ENCODE measurements at regions of chr20 and their contacts with region 1.

Region 1: GRCh38 chr20:49846206-49846807 is 33.7 kb downstream of the SLC9A8 start:
- DNase-seq: no peak
- ATAC-seq: peak; percentile 82
- H3K4me3 Mint-ChIP-seq: no peak overlapping the region
- H3K27ac Mint-ChIP-seq: no peak overlapping the region
- H3K4me1 Mint-ChIP-seq: peaks cover 17% of the 10 kb centered on the region
- H3K27me3 Mint-ChIP-seq: no peaks in the 10 kb centered on the region
- CTCF ChIP-seq: no peak

Region 2: GRCh38 chr20:49330544-49331239 is 515.6 kb before region 1 on chr20:
- CTCF ChIA-PET with region 1: interaction called, 3 read pairs
- POLR2A ChIA-PET with region 1: no interaction called
- intact Hi-C with region 1: loop called (anchors 5 kb)
- DNase-seq: no peak
- ATAC-seq: no peak
- H3K4me3 Mint-ChIP-seq: no peak overlapping the region
- H3K27ac Mint-ChIP-seq: no peak overlapping the region
- H3K4me1 Mint-ChIP-seq: no peaks in the 10 kb centered on the region
- H3K27me3 Mint-ChIP-seq: peaks cover 24% of the 10 kb centered on the region
- CTCF ChIP-seq: no peak

Region 3: DNA sequence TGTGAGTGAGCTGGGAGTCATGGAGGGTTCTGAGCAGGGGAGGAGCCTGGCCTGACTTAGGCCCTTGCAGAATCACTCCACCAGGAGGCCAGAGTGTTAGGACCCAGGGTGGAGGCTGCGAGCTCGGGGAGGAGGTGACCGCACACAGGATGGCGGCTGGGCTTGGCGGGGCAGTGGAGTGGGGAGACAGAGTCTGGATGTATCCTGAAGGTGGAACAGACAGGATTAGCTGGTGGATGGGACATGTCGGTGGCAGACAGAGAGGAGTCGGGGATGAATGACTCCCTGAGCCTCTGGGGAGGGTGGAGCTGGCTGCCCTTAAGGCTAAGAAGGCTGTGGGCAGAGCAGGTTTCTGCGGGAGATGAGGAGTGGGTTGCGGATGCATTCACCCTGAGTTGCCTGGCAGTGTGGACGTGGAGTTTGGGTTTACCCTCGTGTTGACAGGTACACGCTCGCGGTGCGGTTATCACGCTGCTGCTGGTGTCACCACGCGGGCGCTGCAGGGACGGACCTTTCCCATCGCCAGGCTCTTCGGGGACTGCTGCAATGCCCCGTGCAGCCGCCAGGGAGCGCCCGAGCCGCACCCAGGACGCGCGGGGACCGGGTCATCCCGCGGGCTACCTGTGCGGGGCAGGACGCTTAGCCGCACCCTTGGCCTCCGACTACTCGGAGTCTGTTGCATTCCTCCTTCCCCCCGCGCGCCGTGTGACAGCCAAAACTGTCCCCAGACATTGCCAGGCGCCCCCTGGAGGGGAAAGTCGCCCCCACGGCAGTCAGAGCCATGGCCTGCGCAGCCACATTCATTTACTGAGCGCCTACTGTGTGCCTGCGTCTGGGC is 235.4 kb before region 1 on chr20:
- CTCF ChIA-PET with region 1: interaction called, 85 read pairs
- POLR2A ChIA-PET with region 1: interaction called, 7 read pairs
- intact Hi-C with region 1: loop called (anchors 1 kb)
- DNase-seq: peak; percentile 81
- ATAC-seq: peak; percentile 87
- H3K4me3 Mint-ChIP-seq: peak overlapping the region; percentile 68
- H3K27ac Mint-ChIP-seq: no peak overlapping the region
- H3K4me1 Mint-ChIP-seq: peaks cover 21% of the 10 kb centered on the region
- H3K27me3 Mint-ChIP-seq: peaks cover 12% of the 10 kb centered on the region
- CTCF ChIP-seq: peak; percentile 79

Region 4: DNA sequence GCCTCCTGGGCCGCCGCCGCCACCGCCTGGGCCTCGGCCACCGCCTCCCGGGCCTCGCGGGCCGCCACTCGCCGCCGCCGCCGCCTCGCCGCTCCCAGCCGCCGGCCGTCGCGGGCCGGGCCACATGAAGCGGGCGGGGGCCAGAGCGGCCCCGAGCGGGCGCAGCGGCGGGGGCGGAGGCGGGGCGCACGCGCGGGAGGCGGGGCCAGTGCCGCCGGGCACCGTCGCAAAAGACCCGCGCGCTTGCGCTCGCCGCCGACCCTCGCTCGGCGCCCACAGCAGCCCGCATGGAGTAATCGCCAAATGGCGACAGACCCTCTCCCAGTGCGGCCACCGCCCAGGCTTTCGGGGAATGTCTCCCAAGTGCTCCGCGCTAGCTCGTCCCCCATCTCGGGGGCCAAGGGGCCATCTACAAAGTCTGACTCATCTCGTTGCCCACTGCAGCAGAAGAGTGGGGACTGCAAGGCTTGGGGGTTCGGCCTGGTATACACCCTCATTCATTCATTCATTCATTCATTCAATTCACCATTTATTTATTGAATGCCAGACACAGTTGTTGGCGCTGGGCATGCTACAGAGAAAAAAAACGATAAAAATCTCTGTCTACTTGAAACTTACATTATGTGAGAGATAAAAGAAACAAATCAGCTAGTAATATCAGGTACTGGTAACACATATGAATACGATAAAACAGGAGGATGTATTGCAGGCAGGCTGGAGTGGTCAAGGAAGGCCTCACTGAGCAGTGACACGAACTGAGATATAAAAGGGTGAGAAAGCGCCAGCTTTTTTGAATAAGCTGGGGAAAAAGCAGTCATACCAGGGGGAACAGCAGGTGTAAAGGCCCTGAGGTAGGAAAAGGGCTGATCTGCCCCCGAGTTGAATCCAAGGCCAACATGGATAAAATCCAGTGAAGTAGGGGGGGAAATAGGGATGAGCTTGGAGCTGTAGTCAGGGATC is 132.3 kb before region 1 on chr20 and contains the start of gene B4GALT5:
- CTCF ChIA-PET with region 1: interaction called, 5 read pairs
- POLR2A ChIA-PET with region 1: interaction called, 7 read pairs
- intact Hi-C with region 1: loop called (anchors 2 kb)
- DNase-seq: peak; percentile 81
- ATAC-seq: peak; percentile 79
- H3K4me3 Mint-ChIP-seq: peak within 1 kb of the TSS; percentile 96
- H3K27ac Mint-ChIP-seq: peak within 1 kb of the TSS; percentile 94
- H3K4me1 Mint-ChIP-seq: peaks cover 48% of the 10 kb centered on the region
- H3K27me3 Mint-ChIP-seq: no peaks in the 10 kb centered on the region
- CTCF ChIP-seq: no peak
- total RNA-seq, gene B4GALT5: 70.6 and 72.9 TPM in 2 replicates

Region 5: GRCh38 chr20:49821870-49822331 is 24.4 kb before region 1 on chr20:
- CTCF ChIA-PET with region 1: interaction called, 28 read pairs
- POLR2A ChIA-PET with region 1: interaction called, 3 read pairs
- intact Hi-C with region 1: no loop called
- DNase-seq: no peak
- ATAC-seq: no peak
- H3K4me3 Mint-ChIP-seq: peak overlapping the region; percentile 24
- H3K27ac Mint-ChIP-seq: peak overlapping the region; percentile 76
- H3K4me1 Mint-ChIP-seq: peaks cover 48% of the 10 kb centered on the region
- H3K27me3 Mint-ChIP-seq: no peaks in the 10 kb centered on the region
- CTCF ChIP-seq: no peak

Region 6: DNA sequence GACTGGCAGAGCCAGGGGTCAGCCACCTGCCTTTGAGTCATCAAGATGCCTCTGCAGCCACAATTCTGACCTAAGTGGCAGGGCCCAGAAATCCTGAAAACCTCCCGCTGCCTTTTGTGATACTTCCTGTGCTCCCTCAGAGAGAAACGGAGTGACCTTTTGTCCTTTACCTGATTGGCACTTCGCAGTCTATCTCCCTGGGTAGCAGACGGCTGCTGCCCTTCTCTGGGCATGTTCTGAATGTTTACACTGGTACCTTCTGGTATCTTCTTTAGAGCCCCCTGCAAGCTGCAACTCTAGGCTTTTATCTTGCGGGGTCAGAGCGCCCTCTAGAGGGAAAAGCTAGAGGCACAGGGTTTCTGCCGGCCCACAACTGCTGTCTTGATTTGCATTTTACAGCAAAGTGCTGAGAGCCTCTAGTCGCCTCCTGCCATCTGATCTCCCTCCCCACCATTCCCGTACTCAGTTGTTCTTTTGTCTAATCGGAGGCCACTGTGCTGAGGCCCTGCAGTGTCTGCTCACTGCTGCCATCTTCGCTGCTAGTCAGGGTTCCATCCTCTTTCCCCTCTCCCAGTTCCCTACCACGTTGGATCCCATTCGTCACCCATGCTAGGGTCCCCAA is 42.1 kb after region 1 on chr20:
- CTCF ChIA-PET with region 1: interaction called, 15 read pairs
- POLR2A ChIA-PET with region 1: interaction called, 3 read pairs
- intact Hi-C with region 1: loop called (anchors 2 kb)
- DNase-seq: peak; percentile 54
- ATAC-seq: peak; percentile 69
- H3K4me3 Mint-ChIP-seq: no peak overlapping the region
- H3K27ac Mint-ChIP-seq: peak overlapping the region; percentile 46
- H3K4me1 Mint-ChIP-seq: peaks cover 10% of the 10 kb centered on the region
- H3K27me3 Mint-ChIP-seq: no peaks in the 10 kb centered on the region
- CTCF ChIP-seq: no peak

Region 7: DNA sequence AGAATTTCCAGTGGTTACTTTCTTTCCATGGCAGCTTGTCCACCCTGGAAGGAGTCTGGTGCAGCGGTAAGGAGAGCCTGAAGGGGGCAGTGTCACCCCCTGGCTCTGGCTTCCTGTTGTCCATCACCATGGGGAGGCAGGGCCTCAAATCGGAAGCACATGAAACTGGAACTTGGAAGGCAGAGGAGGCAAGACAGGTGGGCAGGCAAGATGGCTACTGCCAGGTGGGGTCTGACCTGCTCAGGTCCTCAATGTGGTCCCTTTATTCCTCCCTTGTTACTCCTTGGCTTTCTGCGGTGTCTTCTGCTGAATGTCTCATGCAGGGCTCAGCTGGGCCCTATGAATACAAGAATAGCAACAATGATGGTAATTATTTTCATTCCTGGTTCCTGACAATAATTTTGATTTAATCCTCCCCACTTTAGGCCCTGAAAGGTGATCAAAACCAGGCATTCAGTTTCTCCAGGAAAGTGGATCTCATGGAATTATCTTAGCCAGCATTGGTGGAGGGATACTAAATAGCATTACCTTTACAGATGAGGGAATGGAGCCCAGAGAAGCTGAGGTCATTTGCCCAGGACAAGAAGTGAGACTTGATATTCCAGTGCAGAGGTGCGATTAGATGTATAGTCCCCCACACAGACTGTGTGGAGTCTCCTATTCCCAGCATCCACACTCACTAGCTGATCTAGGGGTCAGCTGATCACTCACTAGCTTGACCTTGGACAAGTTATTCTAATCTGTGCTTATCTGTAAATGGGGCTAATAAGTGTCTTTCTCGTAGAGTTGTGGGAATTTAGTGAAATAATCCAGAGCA is 118.9 kb after region 1 on chr20:
- CTCF ChIA-PET with region 1: no interaction called
- POLR2A ChIA-PET with region 1: no interaction called
- intact Hi-C with region 1: no loop called
- DNase-seq: no peak
- ATAC-seq: no peak
- H3K4me3 Mint-ChIP-seq: no peak overlapping the region
- H3K27ac Mint-ChIP-seq: no peak overlapping the region
- H3K4me1 Mint-ChIP-seq: peaks cover 2% of the 10 kb centered on the region
- H3K27me3 Mint-ChIP-seq: no peaks in the 10 kb centered on the region
- CTCF ChIP-seq: no peak

Region 8: DNA sequence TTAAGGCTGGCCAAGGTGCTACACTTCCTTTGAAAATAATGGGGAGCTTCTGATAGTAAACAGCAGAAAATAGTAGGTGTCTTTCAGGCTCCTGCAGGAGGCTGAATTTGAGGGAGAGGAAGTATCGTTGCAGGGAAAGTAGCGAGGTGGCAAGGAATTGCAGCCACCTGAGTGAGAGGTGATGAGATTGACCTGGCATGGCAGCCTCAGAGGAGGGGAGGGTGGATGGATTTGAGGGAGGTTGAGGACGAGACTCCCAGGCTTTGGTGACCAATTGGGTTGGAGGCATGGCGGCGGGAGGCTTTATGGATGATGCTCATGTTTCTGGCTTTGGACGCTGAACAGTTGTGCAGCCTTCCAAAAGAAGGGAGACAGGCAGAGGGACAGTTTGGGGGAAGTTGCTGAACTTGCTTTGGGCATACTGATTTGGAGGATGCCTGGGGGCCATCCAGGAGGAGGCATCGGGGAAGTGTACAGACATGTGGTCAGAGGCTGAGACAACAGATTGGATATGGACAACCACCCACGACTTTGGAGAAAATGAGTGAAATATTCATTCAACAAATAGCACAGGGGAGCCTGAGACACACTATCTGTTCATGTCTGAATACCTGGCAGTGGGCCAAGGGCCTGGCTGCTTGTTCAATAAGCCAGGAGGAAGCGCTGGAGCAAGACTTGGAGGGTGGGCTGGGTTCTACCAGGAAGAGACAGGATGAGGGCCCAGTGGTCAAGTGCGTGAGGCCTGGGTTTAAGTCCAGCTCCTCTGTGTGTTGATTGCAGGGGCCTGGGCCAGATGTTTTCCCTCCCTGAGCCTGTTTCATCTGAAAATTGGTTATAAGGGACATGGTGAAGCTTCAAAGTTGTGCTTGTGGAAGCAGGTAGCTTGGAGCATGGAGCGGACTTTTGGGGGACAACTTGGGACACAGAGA is 457.5 kb after region 1 on chr20:
- CTCF ChIA-PET with region 1: no interaction called
- POLR2A ChIA-PET with region 1: no interaction called
- intact Hi-C with region 1: no loop called
- DNase-seq: no peak
- ATAC-seq: no peak
- H3K4me3 Mint-ChIP-seq: no peak overlapping the region
- H3K27ac Mint-ChIP-seq: no peak overlapping the region
- H3K4me1 Mint-ChIP-seq: no peaks in the 10 kb centered on the region
- H3K27me3 Mint-ChIP-seq: peaks cover 3% of the 10 kb centered on the region
- CTCF ChIP-seq: no peak

Region 9: DNA sequence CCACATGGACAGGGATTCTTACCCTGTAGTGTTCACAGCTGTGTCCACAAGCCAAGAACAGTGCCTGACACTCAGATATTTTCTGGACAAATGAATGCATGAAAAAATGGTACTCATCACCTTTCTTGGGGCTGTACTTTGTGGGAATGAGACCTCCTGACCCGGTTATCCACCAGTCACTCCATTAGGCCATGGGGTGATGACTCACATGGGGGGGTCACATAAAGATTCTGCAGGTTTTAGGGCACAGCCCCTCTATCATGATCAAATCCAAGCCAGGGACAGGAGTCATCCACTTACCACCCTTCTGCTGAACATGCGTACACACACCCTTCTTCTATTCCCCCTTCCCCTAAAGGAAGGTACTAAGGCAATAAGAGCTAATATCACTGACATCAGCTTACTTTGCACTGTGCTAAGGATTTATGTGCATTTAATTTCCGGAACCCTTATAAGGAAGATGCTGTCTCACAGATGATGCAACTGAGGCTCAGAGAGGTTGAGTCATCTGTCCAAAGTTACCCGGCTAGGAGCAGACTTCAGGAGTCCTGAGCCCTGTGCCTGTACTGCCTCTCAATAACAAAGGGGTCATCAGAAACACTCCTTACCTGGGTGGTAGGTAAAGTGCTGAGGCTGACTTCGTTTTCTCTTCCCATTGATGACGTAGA is 1588.4 kb after region 1 on chr20:
- CTCF ChIA-PET with region 1: no interaction called
- POLR2A ChIA-PET with region 1: no interaction called
- intact Hi-C with region 1: no loop called
- DNase-seq: no peak
- ATAC-seq: no peak
- H3K4me3 Mint-ChIP-seq: no peak overlapping the region
- H3K27ac Mint-ChIP-seq: no peak overlapping the region
- H3K4me1 Mint-ChIP-seq: peaks cover 29% of the 10 kb centered on the region
- H3K27me3 Mint-ChIP-seq: no peaks in the 10 kb centered on the region
- CTCF ChIP-seq: no peak